Naive thymus-derived CD8-positive, alpha-beta T cell (primary cell): ENCODE measurements at regions of chr16 and their contacts with region 1.

Region 1: DNA sequence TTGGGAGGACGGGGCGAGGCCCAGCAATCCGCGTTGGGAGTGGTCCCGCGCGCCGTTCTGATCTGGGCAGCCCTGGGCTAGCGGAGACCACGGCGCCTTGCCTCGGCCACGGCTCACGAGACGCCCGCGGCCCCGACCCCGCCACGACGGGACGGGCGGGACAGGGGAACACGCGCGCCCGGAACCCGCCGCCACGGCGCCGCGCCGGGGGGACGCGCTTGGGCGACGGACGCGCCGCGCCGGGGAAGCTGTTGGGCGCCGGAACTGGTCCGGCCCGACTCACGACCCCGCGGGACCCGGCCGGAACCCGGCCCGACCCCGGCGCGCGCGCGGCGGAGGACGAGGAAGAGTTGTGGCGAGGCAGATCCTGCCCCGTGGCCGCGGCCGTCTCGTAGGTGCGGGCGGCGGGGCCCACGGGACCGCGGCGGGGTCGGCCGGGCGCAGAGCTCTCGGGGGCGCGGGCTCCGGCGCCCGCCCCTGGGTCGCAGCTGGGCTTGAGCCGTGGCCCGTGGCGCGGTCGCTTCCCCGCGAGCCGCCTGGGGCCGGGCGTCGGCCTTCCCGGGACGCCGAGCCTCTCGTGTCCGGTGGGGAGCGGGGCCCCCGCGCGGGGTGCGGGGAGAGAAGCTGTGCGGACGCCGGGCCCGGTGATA is at the start of gene ACSF3:
- DNase-seq: peak; percentile 37 to 78 (median 62)
- ATAC-seq: peak; percentile 8 to 43
- H3K4me3 Mint-ChIP-seq: peak within 1 kb of the TSS; percentile 90 to 98 (median 96)
- H3K27ac Mint-ChIP-seq: peak within 1 kb of the TSS; percentile 86 to 100 (median 96)
- H3K4me1 Mint-ChIP-seq: peaks cover 22 to 52% (median 47%) of the 10 kb centered on the region in 4 donors
- H3K27me3 Mint-ChIP-seq: peaks cover 0 to 13% (median 7%) of the 10 kb centered on the region in 5 donors
- polyA plus RNA-seq, gene ACSF3: 21.3 to 44.7 (median 22.9) TPM

Region 2: GRCh38 chr16:89115216-89115861 is 21.6 kb after region 1 on chr16:
- POLR2A ChIA-PET with region 1: interaction called, 51 read pairs
- DNase-seq: peak; percentile 78 to 97 (median 92)
- ATAC-seq: peak; percentile 89 to 90
- H3K4me3 Mint-ChIP-seq: peak overlapping the region; percentile 77 to 96 (median 87)
- H3K27ac Mint-ChIP-seq: peak overlapping the region; percentile 95 to 100 (median 99)
- H3K4me1 Mint-ChIP-seq: peaks cover 18 to 58% (median 50%) of the 10 kb centered on the region in 4 donors
- H3K27me3 Mint-ChIP-seq: no peaks in the 10 kb centered on the region

Region 3: DNA sequence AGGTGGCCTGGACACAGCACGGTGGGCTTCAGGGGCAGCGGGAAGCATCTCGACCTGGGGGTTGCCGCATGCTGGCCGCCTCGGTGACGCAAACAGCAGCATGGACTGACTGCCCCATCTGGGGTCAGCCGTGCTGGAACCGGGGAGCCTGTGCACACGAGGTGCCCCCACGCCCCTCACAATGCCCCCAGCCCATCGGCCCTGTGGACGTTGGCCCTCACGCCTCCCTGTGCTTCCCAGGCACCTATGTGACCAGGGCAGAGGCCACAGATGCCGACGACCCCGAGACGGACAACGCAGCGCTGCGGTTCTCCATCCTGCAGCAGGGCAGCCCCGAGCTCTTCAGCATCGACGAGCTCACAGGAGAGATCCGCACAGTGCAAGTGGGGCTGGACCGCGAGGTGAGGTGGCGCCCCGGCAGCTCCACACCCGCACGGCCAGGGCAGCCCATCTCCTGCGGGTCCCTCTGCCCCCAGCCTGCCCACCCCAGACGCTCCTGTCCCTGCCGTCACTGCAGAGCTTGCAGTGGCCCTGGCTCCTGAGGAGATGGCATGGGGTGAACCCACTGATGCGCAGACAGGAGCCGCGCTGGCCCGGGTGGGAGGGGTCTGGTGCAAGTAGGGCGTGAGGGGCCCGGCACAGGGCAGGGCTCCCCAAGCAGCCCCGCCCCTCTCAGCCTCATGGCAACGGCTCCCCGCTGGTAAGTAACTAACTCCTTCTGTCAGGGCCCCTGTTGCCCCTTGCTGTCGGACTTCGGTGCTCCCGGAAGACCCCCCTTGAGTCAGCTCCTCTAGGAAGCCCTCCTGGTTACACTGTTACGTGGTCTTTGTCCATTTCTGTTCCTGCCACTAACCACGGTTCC is 91.4 kb after region 1 on chr16:
- POLR2A ChIA-PET with region 1: no interaction called
- DNase-seq: peak in 5 of 10 donors; percentile 52 to 75 (median 60)
- ATAC-seq: peak; percentile 36 to 60
- H3K4me3 Mint-ChIP-seq: no peak overlapping the region
- H3K27ac Mint-ChIP-seq: peak overlapping the region in 2 of 10 donors; percentile 29 to 74
- H3K4me1 Mint-ChIP-seq: peaks cover 4 to 12% (median 7%) of the 10 kb centered on the region in 4 donors
- H3K27me3 Mint-ChIP-seq: no peaks in the 10 kb centered on the region

Region 4: GRCh38 chr16:89217388-89218191 is 123.9 kb after region 1 on chr16 and contains the start of gene ZNF778:
- POLR2A ChIA-PET with region 1: interaction called, 10 read pairs
- DNase-seq: peak; percentile 72 to 89 (median 80)
- ATAC-seq: peak; percentile 79 to 80
- H3K4me3 Mint-ChIP-seq: peak within 1 kb of the TSS; percentile 79 to 97 (median 87)
- H3K27ac Mint-ChIP-seq: peak within 1 kb of the TSS; percentile 84 to 96 (median 88)
- H3K4me1 Mint-ChIP-seq: peaks cover 12 to 39% (median 26%) of the 10 kb centered on the region in 4 donors
- H3K27me3 Mint-ChIP-seq: no peaks in the 10 kb centered on the region
- polyA plus RNA-seq, gene ZNF778: 2.0 to 5.5 (median 2.9) TPM